ENCODE measurements at regions of chr2 and their contacts with region 1.

Region 1: DNA sequence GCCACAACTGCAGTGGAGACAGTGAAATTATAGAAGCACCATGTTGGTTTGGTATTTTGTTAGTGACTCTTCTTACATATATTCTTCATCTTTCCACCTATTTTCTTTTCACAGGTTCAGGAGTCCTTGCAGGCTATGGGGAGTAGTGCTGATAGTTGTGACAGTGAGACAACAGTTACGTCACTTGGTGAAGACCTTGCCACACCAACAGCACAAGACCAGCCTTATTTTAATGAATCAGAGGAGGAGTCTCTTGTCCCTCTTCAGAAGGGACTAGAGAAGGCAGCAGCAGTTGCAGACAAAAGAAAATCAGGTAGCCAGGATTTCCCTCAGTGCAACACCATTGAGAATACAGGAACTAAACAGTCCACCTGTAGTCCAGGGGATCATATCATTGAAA is 23.6 kb downstream of the ITPRID2 start:
- DNase-seq: no peak
- ATAC-seq: no peak
- H3K4me3 ChIP-seq: no peak overlapping the region
- H3K27ac ChIP-seq: no peak overlapping the region
- H3K4me1 ChIP-seq: no peaks in the 10 kb centered on the region
- H3K27me3 ChIP-seq: no peaks in the 10 kb centered on the region
- CTCF ChIP-seq: no peak

Region 2: DNA sequence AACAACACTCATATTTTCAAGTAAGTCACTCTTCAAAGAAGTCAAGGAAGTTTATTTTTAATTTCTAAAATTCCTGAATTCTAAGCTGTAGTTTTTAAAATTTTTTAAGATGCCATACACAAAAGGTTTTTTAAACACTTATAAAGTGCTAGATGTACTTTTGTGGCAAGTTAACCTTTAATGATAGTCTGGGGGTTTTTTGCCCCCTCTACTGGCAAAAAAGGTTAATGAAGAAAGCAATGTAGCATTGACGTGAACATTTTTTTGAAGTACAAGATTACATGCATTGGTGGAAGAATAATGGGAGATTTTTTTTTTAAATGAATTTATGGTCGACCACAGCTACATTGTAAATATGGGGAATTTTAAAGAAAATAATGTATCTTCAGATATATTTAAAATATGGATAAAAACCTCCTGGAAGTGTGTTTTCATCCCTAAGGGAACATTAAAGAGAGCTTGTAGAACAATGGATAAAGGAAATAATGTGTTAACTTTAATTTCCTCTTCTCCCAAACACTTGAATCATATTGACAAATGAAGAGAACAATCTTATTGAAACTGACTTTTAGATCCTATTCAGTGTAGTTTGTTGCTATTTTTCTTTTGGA is 11.0 kb before region 1 on chr2:
- intact Hi-C with region 1: loop called in 1 of 2 experiments (anchors 1 kb)
- DNase-seq: no peak
- ATAC-seq: no peak
- H3K4me3 ChIP-seq: no peak overlapping the region
- H3K27ac ChIP-seq: no peak overlapping the region
- H3K4me1 ChIP-seq: no peaks in the 10 kb centered on the region
- H3K27me3 ChIP-seq: no peaks in the 10 kb centered on the region
- CTCF ChIP-seq: peak; percentile 46

Region 3: GRCh38 chr2:182049372-182050148 is 134.5 kb after region 1 on chr2:
- intact Hi-C with region 1: no loop called
- DNase-seq: no peak
- ATAC-seq: no peak
- H3K4me3 ChIP-seq: no peak overlapping the region
- H3K27ac ChIP-seq: no peak overlapping the region
- H3K4me1 ChIP-seq: no peaks in the 10 kb centered on the region
- H3K27me3 ChIP-seq: no peaks in the 10 kb centered on the region
- CTCF ChIP-seq: no peak

Measured in psoas muscle (tissue), 8 donors.